ENCODE measurements at regions of chr14 and their contacts with region 1.

Region 1: GRCh38 chr14:101628471-101628966 is 67.2 kb downstream of the DIO3 start:
- DNase-seq: peak; percentile 59
- H3K4me3 ChIP-seq: no peak overlapping the region
- H3K27ac ChIP-seq: no peak overlapping the region
- H3K4me1 ChIP-seq: peaks cover 2% of the 10 kb centered on the region
- H3K27me3 ChIP-seq: no peaks in the 10 kb centered on the region
- CTCF ChIP-seq: peak; percentile 93 to 95
- POLR2A ChIP-seq: no peak

Region 2: GRCh38 chr14:100850841-100851585 is 777.5 kb before region 1 on chr14:
- CTCF ChIA-PET with region 1: no interaction called
- POLR2A ChIA-PET with region 1: no interaction called
- dilution Hi-C with region 1: no loop called
- intact Hi-C with region 1: loop called (anchors 1 kb)
- DNase-seq: peak; percentile 32
- H3K4me3 ChIP-seq: no peak overlapping the region
- H3K27ac ChIP-seq: no peak overlapping the region
- H3K4me1 ChIP-seq: no peaks in the 10 kb centered on the region
- H3K27me3 ChIP-seq: no peaks in the 10 kb centered on the region
- CTCF ChIP-seq: peak; percentile 71 to 85
- POLR2A ChIP-seq: no peak

Region 3: GRCh38 chr14:101721951-101722661 is 93.6 kb after region 1 on chr14:
- CTCF ChIA-PET with region 1: no interaction called
- POLR2A ChIA-PET with region 1: no interaction called
- dilution Hi-C with region 1: no loop called
- intact Hi-C with region 1: no loop called
- DNase-seq: peak; percentile 80
- H3K4me3 ChIP-seq: no peak overlapping the region
- H3K27ac ChIP-seq: no peak overlapping the region
- H3K4me1 ChIP-seq: peaks cover 12% of the 10 kb centered on the region
- H3K27me3 ChIP-seq: peaks cover 26 to 28% of the 10 kb centered on the region in 2 experiments
- CTCF ChIP-seq: no peak
- POLR2A ChIP-seq: no peak